Mucosa of descending colon (tissue), 3 donors: ENCODE measurements at regions of chr2 and their contacts with region 1.

Region 1: GRCh38 chr2:127649684-127650040 is 3.7 kb downstream of the GPR17 start:
- DNase-seq: peak; percentile 67 to 96 (median 80)
- ATAC-seq: peak; percentile 88
- H3K4me3 ChIP-seq: no peak overlapping the region
- H3K4me1 ChIP-seq: peaks cover 6% of the 10 kb centered on the region
- CTCF ChIP-seq: peak; percentile 74

Region 2: DNA sequence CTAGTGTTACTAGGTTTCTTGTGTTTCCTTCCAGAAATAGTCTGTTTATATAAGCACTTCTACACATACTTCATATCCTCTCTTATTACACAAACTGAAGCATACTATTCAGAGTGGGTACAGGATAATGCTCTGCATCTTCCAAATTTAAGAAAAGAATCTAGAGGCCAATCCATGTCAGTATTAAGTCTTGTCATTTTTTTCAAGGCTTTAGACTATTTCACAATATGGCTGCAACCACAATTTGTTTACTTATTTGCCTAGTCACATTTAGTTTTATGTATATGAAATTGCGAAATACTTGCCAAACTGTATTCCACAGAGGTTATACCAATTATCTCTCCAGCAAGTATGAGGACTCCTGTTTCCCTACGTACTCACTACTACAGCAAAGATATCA is 151.3 kb before region 1 on chr2:
- intact Hi-C with region 1: no loop called
- DNase-seq: no peak
- ATAC-seq: no peak
- H3K4me3 ChIP-seq: no peak overlapping the region
- H3K4me1 ChIP-seq: no peaks in the 10 kb centered on the region
- CTCF ChIP-seq: no peak

Region 3: DNA sequence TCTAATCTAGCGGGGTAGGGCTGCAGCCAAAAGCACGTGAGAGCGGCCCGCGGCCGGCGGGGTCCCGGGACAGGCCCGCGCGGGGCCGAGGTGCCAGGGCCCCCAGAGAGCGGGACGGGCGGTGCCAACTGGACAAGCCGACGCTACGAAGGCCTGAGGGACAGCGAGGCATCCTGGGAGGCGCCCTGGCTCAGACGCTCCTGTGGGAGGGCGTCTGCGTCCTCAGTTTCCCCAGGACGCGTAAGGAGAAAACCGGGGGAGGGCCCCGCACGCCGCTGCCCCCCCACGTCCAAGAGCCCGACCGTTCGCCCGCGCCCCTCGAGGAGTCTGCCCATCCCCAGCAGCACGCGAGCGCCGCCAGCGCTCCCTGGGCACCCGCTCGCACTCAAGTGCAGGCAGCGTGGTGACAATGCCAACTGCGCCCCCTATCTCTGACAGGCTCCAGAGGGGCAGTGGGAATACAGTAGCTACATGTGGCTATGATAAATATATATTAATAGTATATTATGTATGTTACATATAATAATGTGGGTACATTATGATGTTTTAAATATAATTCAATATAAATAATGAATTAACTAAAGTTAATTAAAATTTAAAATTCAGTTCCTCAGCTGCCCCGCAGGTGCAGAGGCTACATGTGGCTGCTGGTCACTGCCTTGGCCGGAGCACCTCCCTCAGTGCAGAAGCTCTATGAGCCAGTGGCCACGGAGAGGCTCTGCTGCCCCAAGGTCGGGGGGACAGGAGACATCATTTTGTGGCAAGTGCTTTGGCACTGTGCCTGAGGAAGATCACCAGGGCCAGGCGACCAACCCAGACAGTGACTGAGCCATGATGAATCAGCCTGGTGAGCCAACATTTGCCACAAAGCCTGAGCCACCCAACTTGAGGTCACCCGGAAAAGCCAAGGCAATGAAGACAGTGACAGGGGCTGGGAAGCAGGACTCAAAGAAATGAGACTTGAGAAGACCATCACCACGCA is 46.1 kb after region 1 on chr2:
- intact Hi-C with region 1: loop called in 1 of 2 experiments (anchors 10 kb)
- DNase-seq: peak in 2 of 3 donors; percentile 70 to 74
- ATAC-seq: peak; percentile 74
- H3K4me3 ChIP-seq: no peak overlapping the region
- H3K4me1 ChIP-seq: peaks cover 5% of the 10 kb centered on the region
- CTCF ChIP-seq: no peak